Sigmoid colon (tissue), 7 donors: ENCODE measurements at regions of chr10 and their contacts with region 1.

Region 1: DNA sequence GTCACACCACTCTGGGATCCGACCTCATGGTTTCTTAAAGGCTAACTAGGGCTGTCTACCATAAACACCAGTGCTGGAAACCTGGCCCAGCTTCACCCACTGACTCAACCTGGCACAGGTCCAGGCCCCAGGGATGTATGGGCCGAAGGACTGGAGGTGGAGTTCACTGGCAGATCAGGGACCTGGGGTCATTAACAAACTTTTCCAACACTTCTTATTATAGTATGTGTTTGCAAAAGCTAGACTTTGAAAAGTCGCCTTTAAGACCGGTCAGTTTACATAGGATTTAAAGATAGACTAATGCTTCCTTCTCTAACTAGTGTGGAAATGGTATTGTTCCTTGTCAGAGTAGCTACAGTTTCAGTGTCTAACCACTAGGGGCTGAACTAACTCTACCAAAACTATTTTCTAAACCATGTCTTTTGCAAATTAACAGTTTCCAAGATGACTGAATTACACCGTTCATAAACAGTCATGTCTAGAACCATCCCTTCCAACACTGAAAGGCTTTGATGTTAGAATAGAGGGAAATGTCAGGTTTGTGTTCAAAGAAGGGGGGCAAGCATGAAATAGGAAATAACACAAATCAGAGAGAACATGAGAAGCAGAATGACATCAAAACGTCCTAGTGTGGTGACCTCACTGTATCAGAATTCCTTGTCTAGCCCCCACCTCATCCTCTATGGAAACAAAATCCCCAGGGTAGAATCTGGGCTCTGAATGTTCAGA is 29.7 kb downstream of the STN1 start:
- DNase-seq: peak; percentile 89
- H3K4me3 ChIP-seq: no peak overlapping the region
- H3K27ac ChIP-seq: peak overlapping the region; percentile 52 to 79 (median 70)
- H3K4me1 ChIP-seq: peaks cover 0 to 19% (median 13%) of the 10 kb centered on the region in 4 donors
- H3K27me3 ChIP-seq: no peaks in the 10 kb centered on the region
- CTCF ChIP-seq: peak; percentile 81 to 95 (median 85)
- EP300 ChIP-seq: no peak
- POLR2A ChIP-seq: no peak

Region 2: GRCh38 chr10:103709341-103709920 is 178.8 kb before region 1 on chr10:
- intact Hi-C with region 1: no loop called
- DNase-seq: no peak
- H3K4me3 ChIP-seq: no peak overlapping the region
- H3K27ac ChIP-seq: no peak overlapping the region
- H3K4me1 ChIP-seq: peaks cover 0 to under 1% (median 0%) of the 10 kb centered on the region in 4 donors
- H3K27me3 ChIP-seq: no peaks in the 10 kb centered on the region
- CTCF ChIP-seq: no peak
- EP300 ChIP-seq: no peak
- POLR2A ChIP-seq: no peak

Region 3: DNA sequence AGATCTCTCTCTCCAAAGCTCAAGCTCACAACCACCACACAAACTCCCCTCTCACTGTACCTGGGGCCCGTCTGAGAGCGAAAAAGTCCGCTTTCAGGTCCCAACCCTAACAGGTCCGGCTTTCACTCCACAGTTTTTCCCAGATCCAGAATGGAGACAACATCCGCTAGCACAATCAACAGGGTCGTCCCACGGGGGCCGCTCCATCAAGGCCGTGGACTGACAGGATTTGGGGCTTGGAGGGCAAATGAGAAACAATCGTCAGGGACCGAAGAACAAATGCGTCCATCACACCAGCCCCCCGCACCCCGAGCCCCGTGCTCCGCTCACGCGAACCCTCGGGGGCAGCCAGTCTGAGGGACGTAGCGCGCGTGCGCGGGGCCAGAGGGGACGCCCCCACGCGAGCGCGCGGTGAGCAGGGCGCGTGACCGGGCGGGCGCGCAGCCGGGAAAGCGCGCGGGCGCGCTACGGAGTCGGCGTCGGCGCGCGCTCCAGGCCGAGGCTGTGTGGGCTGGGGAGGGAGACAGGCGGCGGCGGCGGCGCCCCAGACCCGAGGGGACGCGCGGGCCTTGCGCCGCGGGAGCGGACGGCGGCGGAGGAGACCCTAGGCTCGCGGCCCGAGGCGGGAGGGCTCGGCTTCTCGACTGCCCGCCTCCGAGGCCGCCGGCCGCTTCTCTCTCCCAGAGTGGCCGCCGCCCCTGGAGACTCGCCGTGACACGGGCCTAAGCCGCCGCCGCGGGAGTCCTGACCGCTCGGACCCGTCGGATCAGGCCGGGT is 78.6 kb after region 1 on chr10 and contains the start of gene SLK:
- intact Hi-C with region 1: loop called (anchors 2 kb)
- DNase-seq: peak; percentile 89
- H3K4me3 ChIP-seq: peak within 1 kb of the TSS; percentile 86 to 98 (median 94)
- H3K27ac ChIP-seq: peak within 1 kb of the TSS; percentile 97 to 99 (median 98)
- H3K4me1 ChIP-seq: peaks cover 0 to 35% (median 25%) of the 10 kb centered on the region in 4 donors
- H3K27me3 ChIP-seq: no peaks in the 10 kb centered on the region
- CTCF ChIP-seq: no peak
- EP300 ChIP-seq: no peak
- POLR2A ChIP-seq: peak in 1 of 2 donors; percentile 22
- total RNA-seq, gene SLK: 72.1 to 96.1 (median 76.5) TPM

Region 4: DNA sequence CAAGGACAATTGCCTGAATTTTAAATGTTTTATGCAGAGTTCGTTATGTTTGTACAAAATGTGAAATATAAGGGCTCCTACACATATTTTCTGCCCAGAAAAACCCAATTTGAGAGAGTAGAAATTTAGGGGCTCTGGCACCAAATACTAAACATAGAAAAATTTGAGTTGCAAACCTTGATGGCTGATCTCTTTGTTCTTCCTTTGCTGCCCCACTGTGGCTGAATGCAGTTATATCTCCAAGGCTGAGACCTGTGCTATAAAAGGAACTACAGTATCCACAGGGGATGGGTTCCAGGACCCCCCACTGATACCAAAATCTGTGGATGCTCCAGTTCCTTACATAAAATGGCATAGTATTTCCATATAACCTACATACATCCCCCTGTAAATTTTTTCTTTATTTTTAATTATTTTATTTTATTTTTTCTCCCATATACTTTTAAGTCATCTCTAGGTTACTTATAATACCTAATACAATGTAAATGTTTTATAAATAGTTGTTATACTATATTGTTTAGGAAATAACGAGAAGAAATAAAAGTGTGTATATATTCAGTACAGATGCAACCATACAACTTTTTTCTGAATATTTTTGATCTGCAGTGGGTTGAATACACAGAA is 321.4 kb after region 1 on chr10:
- intact Hi-C with region 1: loop called (anchors 2 kb)
- DNase-seq: no peak
- H3K4me3 ChIP-seq: no peak overlapping the region
- H3K27ac ChIP-seq: no peak overlapping the region
- H3K4me1 ChIP-seq: no peaks in the 10 kb centered on the region
- H3K27me3 ChIP-seq: no peaks in the 10 kb centered on the region
- CTCF ChIP-seq: peak in 3 of 4 experiments; percentile 23 to 45 (median 26)
- EP300 ChIP-seq: no peak
- POLR2A ChIP-seq: no peak

Region 5: GRCh38 chr10:104337974-104338735 is 449.9 kb after region 1 on chr10 and contains the start of gene ITPRIP:
- intact Hi-C with region 1: loop called (anchors 10 kb)
- DNase-seq: peak; percentile 93
- H3K4me3 ChIP-seq: peak within 1 kb of the TSS; percentile 74 to 98 (median 92)
- H3K27ac ChIP-seq: peak within 1 kb of the TSS; percentile 97 to 99 (median 98)
- H3K4me1 ChIP-seq: peaks cover 0 to 58% (median 51%) of the 10 kb centered on the region in 4 donors
- H3K27me3 ChIP-seq: no peaks in the 10 kb centered on the region
- CTCF ChIP-seq: no peak
- EP300 ChIP-seq: no peak
- POLR2A ChIP-seq: peak; percentile 89 to 94
- total RNA-seq, gene ITPRIP: 11.4 to 22.4 (median 15.3) TPM